HEK293 (cell line): ENCODE measurements at regions of chr15 and their contacts with region 1.

Region 1: GRCh38 chr15:58070801-58071418 is 5.4 kb upstream of the ALDH1A2 start:
- H3K4me3 ChIP-seq: no peak overlapping the region
- H3K27ac ChIP-seq: no peak overlapping the region
- H3K4me1 ChIP-seq: no peaks in the 10 kb centered on the region; the same call in 1 of the 2 replicates
- CTCF ChIP-seq: peak; percentile 36; the same call in 1 of the 2 replicates

Region 2: GRCh38 chr15:57732526-57733331 is 338.2 kb before region 1 on chr15:
- CTCF ChIA-PET with region 1: interaction called, 22 read pairs
- POLR2A ChIA-PET with region 1: no interaction called
- H3K4me3 ChIP-seq: no peak overlapping the region
- H3K27ac ChIP-seq: no peak overlapping the region
- H3K4me1 ChIP-seq: no peaks in the 10 kb centered on the region
- CTCF ChIP-seq: peak; percentile 19; the same call in 1 of the 2 replicates

Region 3: GRCh38 chr15:57769266-57769665 is 301.6 kb before region 1 on chr15:
- CTCF ChIA-PET with region 1: no interaction called
- POLR2A ChIA-PET with region 1: no interaction called
- H3K4me3 ChIP-seq: no peak overlapping the region
- H3K27ac ChIP-seq: no peak overlapping the region
- H3K4me1 ChIP-seq: no peaks in the 10 kb centered on the region
- CTCF ChIP-seq: no peak

Region 4: GRCh38 chr15:57861036-57861638 is 209.8 kb before region 1 on chr15:
- CTCF ChIA-PET with region 1: interaction called, 54 read pairs
- POLR2A ChIA-PET with region 1: no interaction called
- H3K4me3 ChIP-seq: no peak overlapping the region
- H3K27ac ChIP-seq: no peak overlapping the region
- H3K4me1 ChIP-seq: no peaks in the 10 kb centered on the region
- CTCF ChIP-seq: no peak

Region 5: DNA sequence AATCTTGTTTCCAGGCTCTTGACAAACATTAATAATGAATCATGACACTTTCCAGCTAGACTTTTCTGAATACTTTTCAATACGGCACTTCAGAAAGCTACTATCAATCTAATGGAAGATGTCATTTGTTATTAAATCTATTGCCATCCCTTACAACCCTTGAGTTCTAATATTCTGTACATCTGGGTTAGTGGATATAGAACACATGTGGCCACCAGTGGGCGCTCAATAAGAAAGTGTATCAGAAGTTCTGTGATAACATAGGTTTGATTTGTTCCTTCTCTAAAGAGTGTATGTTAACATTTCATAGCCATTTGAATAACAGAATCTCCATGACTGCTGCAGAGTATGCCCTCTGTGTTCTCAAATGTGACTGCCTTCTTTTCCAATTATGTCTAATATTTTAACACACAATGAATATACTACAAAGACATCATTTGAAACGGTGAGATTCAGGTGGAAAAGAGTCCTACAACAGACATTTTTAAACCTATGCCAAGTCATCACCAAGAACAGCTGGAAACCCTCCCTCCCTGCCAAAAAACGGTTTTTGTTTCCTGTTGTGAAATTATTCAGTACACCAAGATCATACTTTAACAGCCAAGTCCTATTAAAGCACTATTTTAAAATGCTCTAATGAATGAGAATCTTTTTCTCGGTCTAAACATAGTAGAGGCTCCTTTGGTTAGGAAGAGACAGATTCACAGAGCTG is 27.6 kb before region 1 on chr15:
- CTCF ChIA-PET with region 1: interaction called, 19 read pairs
- POLR2A ChIA-PET with region 1: interaction called, 3 read pairs
- H3K4me3 ChIP-seq: no peak overlapping the region
- H3K27ac ChIP-seq: no peak overlapping the region
- H3K4me1 ChIP-seq: peaks cover 7% of the 10 kb centered on the region
- CTCF ChIP-seq: no peak

Region 6: GRCh38 chr15:58182460-58183163 is 111.7 kb after region 1 on chr15:
- CTCF ChIA-PET with region 1: interaction called, 46 read pairs
- POLR2A ChIA-PET with region 1: interaction called, 7 read pairs
- H3K4me3 ChIP-seq: no peak overlapping the region
- H3K27ac ChIP-seq: no peak overlapping the region
- H3K4me1 ChIP-seq: no peaks in the 10 kb centered on the region
- CTCF ChIP-seq: peak; percentile 89

Region 7: GRCh38 chr15:58423831-58424608 is 353.1 kb after region 1 on chr15:
- CTCF ChIA-PET with region 1: no interaction called
- POLR2A ChIA-PET with region 1: no interaction called
- H3K4me3 ChIP-seq: no peak overlapping the region
- H3K27ac ChIP-seq: no peak overlapping the region
- H3K4me1 ChIP-seq: no peaks in the 10 kb centered on the region
- CTCF ChIP-seq: no peak